Activated CD4-positive, alpha-beta T cell treated with anti-CD3 and anti-CD28 coated beads for 36 hours (primary cell): ENCODE measurements at regions of chr3 and their contacts with region 1.

Region 1: DNA sequence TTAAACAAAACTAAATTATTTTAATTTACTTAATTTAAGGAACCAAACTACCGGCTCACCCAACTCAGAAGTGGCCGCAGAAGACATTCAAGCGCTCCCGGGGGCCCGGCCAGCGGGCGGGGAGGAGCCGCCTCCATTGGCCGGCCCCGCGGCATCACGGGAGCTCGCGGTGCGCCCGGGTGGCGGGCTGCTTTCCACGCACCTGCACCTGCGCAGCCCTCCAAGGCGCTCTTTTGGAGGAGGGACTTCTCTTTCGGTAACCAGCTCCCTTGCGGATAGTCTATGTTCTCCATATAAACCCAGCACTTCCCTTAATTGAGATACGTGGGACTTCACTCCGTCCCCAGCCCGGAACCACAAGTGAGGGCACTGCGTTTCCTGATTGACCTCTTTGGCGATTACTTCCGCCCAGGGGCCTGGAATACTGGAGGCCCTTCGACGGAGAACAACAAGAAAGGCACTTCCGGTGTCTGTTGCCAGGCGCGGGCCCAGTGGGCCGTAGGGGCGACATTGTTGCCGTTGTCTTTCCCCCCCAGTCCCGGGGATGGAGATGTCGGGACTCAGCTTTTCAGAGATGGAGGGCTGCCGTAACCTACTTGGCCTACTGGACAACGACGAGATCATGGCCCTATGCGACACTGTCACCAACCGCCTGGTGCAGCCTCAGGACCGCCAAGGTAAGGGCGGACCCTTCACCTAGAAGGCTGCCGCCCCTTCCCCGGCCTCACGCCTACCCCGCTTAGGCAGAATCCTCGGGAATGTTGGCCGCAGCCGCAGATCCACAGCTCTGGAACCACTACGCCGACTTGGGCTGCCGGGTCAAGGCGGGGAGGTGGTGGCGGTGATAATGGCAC is at the start of gene C3orf38:
- DNase-seq: peak; percentile 87
- ATAC-seq: peak; percentile 87
- H3K4me3 Mint-ChIP-seq: peak within 1 kb of the TSS; percentile 95
- H3K27ac Mint-ChIP-seq: peak within 1 kb of the TSS; percentile 99
- H3K4me1 Mint-ChIP-seq: peaks cover 37% of the 10 kb centered on the region
- H3K27me3 Mint-ChIP-seq: no peaks in the 10 kb centered on the region
- total RNA-seq, gene C3orf38: 22.4 to 27.4 TPM

Region 2: GRCh38 chr3:87227104-87227834 is 922.5 kb before region 1 on chr3 and contains the start of gene CHMP2B:
- CTCF ChIA-PET with region 1: no interaction called
- POLR2A ChIA-PET with region 1: no interaction called
- intact Hi-C with region 1: loop called in 1 of 2 experiments (anchors 1 kb)
- DNase-seq: peak; percentile 94
- ATAC-seq: peak; percentile 94
- H3K4me3 Mint-ChIP-seq: peak within 1 kb of the TSS; percentile 97
- H3K27ac Mint-ChIP-seq: peak within 1 kb of the TSS; percentile 96
- H3K4me1 Mint-ChIP-seq: peaks cover 40% of the 10 kb centered on the region
- H3K27me3 Mint-ChIP-seq: peaks cover 9% of the 10 kb centered on the region
- total RNA-seq, gene CHMP2B: 25.4 to 29.4 TPM

Region 3: GRCh38 chr3:87969620-87970019 is 180.1 kb before region 1 on chr3:
- CTCF ChIA-PET with region 1: no interaction called
- POLR2A ChIA-PET with region 1: no interaction called
- intact Hi-C with region 1: no loop called
- DNase-seq: no peak
- ATAC-seq: no peak
- H3K4me3 Mint-ChIP-seq: no peak overlapping the region
- H3K27ac Mint-ChIP-seq: no peak overlapping the region
- H3K4me1 Mint-ChIP-seq: no peaks in the 10 kb centered on the region
- H3K27me3 Mint-ChIP-seq: peaks cover 2% of the 10 kb centered on the region